MCF 10A (cell line): ENCODE measurements at regions of chr16 and their contacts with region 1.

Region 1: DNA sequence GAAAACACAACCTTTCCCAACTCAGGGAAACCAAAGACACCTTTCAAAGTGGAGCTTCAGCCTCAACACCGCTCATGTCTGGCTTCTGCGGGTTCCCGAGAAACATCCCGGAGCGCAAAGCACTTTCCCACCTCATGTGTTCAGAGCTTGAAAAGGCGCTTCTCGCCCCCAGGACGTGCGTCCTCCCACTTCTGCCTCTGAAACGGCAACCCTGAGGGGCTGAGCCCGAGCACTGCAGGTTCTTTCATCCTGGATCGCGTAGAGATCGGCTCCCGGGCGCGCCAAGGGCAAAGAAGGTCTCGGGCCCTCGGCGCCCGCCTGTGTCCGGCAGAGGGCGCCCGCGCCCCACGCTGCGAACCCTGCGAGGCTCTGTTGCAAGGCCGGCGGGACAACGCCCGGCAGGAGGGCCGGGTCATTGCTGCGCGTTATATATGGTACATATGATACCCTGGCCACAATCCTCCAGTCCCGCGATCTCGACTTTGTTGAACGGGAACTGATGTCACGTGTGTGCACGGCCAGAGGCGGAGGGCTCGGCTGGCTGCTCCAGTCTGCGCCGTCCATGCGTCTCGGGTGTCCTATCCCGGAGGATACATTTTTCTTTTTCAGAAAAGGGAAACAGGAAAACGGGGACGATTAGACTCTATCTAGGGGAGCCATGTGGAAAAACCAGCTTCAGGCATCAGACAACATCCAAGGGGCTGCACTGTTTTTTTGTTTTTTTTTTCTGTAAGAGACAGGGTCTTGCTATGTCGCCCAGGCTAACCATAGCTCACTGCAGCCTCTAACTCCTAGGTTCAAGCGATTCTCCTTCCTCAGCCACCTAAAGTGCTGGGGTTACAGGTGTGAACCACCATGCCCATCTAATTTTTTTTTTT is 19.1 kb downstream of the COQ7 start:
- DNase-seq: peak; percentile 85
- H3K4me3 Mint-ChIP-seq: peak overlapping the region; percentile 54
- H3K27ac Mint-ChIP-seq: no peak overlapping the region
- H3K4me1 Mint-ChIP-seq: peaks cover 6% of the 10 kb centered on the region
- H3K27me3 Mint-ChIP-seq: no peaks in the 10 kb centered on the region
- CTCF ChIP-seq: peak; percentile 97

Region 2: DNA sequence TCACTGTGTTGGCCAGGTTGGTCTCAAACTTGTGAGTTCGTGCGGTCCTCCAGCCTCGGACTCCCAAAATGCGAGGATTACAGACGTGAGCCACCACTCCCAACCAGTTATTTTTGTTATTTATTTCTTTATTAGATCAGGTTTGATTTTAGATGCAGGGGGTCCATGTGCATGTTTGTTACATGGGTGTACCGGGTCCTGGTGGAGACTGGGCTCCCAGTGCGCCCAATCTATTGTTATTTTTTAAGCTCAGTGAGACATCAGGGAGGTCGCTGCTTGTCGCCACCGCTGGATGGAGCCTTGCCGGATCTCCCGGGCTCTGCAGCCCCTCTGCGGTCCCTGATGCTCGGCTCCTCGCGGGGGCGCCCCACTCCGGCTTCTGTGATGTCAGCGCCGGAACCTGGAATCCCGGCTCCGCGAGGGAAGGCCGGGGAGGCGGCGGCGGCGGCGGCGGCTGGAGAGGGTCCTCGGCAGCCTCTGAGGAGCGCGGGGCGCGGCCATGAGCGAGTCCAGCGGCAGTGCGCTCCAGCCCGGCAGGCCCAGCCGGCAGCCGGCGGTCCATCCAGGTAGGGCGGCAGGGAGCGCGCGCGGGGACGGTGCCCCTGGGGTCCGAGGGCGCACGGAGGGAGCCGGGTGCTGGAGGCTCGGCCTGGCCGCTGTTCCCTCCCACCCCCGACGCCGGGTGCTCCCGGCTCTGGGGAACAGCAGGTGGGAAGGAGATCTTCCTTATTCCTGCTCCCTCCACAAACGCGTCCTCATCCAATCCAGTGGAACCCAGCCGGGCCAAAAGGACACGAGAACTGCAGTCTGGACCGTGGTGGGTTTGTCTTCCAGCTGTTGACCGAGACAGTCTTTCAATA is 102.8 kb before region 1 on chr16 and contains the start of gene TMC7:
- CTCF ChIA-PET with region 1: interaction called, 29 read pairs
- POLR2A ChIA-PET with region 1: no interaction called
- intact Hi-C with region 1: no loop called
- DNase-seq: peak; percentile 84
- H3K4me3 Mint-ChIP-seq: peak within 1 kb of the TSS; percentile 72
- H3K27ac Mint-ChIP-seq: peak within 1 kb of the TSS; percentile 49
- H3K4me1 Mint-ChIP-seq: peaks cover 9% of the 10 kb centered on the region
- H3K27me3 Mint-ChIP-seq: no peaks in the 10 kb centered on the region
- CTCF ChIP-seq: peak; percentile 92
- total RNA-seq, gene TMC7: 4.1 and 6.0 TPM in 2 replicates

Region 3: DNA sequence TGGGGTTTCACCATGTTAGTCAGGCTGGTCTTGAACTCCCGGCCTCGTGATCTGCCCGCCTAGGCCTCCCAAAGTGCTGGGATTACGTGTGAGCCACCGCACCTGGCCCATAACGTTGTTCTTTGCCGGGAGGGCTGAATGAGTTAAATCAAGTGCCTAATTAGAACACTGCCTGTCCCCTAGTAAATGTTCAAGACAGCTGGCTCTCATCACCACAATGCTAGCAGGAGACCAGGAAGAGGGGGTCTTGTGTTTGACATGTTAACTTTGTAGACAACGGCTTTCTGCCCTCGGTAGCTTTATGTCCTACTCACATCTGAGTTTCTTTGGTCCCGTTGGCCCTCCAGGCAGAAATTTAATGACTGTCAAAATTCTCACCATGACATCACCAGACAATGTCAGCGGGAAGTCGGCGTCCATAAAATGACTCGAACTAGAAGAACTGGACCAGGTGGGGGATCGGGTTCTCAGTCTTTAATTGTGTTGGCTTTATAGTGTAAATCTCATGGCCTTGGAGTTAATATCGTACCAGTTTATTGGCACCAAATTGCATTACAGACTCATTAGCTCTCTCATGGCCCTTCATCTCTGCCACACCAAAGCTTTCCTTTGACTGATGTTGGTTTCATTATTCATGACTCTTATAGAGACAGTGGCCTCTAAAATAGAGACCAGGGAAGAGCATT is 15.8 kb after region 1 on chr16:
- CTCF ChIA-PET with region 1: interaction called, 14 read pairs
- POLR2A ChIA-PET with region 1: no interaction called
- intact Hi-C with region 1: no loop called
- DNase-seq: no peak
- H3K4me3 Mint-ChIP-seq: no peak overlapping the region
- H3K27ac Mint-ChIP-seq: no peak overlapping the region
- H3K4me1 Mint-ChIP-seq: peaks cover 2% of the 10 kb centered on the region
- H3K27me3 Mint-ChIP-seq: no peaks in the 10 kb centered on the region
- CTCF ChIP-seq: no peak

Region 4: DNA sequence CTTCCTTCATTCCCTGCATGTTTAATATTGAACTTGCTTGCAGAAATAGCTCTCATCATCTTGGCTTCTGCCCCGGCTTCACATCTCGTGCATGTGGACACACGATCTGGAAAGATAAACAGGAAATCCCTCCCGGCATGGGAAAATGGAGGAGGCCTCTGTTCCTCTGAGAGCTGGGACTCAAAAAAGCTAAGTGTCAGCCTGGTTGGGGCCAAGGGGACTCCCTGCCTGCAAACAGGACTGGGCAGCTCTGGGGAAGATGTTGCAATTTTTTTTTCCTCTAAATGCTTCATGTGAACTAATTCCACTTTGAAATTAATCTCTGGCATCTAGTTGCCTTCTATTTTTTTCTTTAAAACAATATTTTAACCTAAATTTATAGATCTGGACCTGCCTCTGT is 52.0 kb after region 1 on chr16:
- CTCF ChIA-PET with region 1: interaction called, 18 read pairs
- POLR2A ChIA-PET with region 1: interaction called, 4 read pairs
- intact Hi-C with region 1: no loop called
- DNase-seq: peak; percentile 99
- H3K4me3 Mint-ChIP-seq: peak overlapping the region; percentile 24
- H3K27ac Mint-ChIP-seq: peak overlapping the region; percentile 44
- H3K4me1 Mint-ChIP-seq: peaks cover 61% of the 10 kb centered on the region
- H3K27me3 Mint-ChIP-seq: no peaks in the 10 kb centered on the region
- CTCF ChIP-seq: no peak

Region 5: DNA sequence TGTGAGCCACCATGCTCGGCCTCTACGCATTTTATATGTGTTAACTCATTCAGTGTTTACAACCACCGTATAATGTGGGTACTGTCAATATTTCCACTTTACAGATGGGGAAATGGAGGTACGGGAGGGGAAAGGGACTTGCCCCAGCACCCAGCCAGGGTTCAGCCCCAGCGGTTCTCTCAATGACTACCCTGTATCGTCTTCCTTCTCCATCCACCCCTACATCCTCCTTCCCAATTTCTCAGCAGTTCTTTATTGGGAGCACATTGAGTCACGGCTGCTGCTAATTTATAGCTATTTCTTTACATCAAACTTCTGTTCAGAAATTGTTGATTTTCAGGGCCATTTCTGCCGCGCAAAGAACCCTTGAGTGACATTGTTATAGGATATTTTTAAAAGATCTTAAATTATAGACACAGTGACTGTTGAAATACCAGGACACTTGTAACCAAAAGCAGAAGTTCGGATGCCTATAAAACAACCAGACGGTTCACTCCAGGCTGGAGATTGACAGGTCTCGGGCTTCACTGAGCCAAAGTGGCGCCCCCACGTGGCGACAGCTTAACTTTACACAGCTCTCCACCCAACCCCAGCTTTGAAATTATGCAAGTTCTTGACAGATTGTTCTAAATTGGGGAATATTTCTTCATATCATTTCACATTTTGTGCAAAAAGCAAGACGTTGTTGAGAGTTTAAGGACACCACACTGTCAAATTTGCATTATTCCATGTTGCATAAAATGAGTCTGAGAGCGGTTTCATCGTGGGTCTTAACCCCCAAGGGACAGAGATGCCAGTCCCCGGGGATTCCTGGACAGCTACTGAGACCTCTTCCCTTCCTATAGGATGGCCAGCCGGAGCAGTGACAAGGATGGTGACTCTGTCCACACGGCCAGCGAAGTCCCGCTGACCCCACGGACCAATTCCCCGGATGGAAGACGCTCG is 93.3 kb after region 1 on chr16:
- CTCF ChIA-PET with region 1: interaction called, 8 read pairs
- POLR2A ChIA-PET with region 1: no interaction called
- intact Hi-C with region 1: loop called (anchors 1 kb)
- DNase-seq: peak; percentile 69
- H3K4me3 Mint-ChIP-seq: no peak overlapping the region
- H3K27ac Mint-ChIP-seq: no peak overlapping the region
- H3K4me1 Mint-ChIP-seq: no peaks in the 10 kb centered on the region
- H3K27me3 Mint-ChIP-seq: no peaks in the 10 kb centered on the region
- CTCF ChIP-seq: peak; percentile 48

Region 6: DNA sequence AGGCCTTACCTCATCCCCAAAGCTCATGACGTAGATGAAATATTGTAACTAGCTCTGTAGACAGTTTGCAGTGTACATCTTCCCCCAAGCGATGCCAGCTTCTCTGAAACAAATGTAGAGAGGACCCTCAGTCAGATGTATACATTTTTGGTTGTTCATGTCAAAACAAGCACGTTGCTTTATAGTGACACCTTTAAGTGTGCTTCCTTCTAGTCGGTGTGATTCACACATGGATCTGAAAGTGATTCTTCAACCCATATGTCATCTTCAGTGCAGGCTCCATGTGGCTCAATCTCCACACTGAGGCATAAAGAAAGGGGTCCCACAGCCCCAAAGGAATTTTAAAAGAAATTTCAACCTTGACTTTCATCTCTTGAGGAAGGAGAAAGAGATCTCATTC is 168.1 kb after region 1 on chr16:
- CTCF ChIA-PET with region 1: no interaction called
- POLR2A ChIA-PET with region 1: no interaction called
- intact Hi-C with region 1: no loop called
- DNase-seq: no peak
- H3K4me3 Mint-ChIP-seq: no peak overlapping the region
- H3K27ac Mint-ChIP-seq: no peak overlapping the region
- H3K4me1 Mint-ChIP-seq: no peaks in the 10 kb centered on the region
- H3K27me3 Mint-ChIP-seq: peaks cover 35% of the 10 kb centered on the region
- CTCF ChIP-seq: no peak

Region 7: GRCh38 chr16:19375561-19376158 is 289.1 kb after region 1 on chr16:
- CTCF ChIA-PET with region 1: interaction called, 154 read pairs
- POLR2A ChIA-PET with region 1: interaction called, 4 read pairs
- intact Hi-C with region 1: loop called (anchors 1 kb)
- DNase-seq: peak; percentile 64
- H3K4me3 Mint-ChIP-seq: no peak overlapping the region
- H3K27ac Mint-ChIP-seq: no peak overlapping the region
- H3K4me1 Mint-ChIP-seq: no peaks in the 10 kb centered on the region
- H3K27me3 Mint-ChIP-seq: no peaks in the 10 kb centered on the region
- CTCF ChIP-seq: peak; percentile 90

Region 8: DNA sequence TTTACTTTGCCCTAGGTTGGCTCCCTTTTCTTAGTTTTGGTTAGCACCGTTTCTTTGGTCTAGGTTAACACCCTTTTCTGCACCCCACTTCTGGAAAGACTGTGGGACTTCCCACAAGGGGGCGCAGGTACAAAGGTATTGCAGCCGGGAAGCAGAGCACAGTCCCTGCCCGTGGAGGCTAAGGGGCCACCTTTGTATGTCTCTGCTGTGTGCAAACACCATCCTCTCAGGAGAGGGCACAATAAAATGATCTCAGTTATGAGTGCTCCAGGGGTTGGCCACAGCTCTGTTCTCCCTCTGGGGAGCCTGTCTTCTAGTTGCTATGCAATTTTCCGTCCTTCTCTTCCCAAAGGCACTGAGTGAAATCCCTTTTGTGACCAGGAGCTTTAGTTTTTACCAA is 302.7 kb after region 1 on chr16:
- CTCF ChIA-PET with region 1: interaction called, 38 read pairs
- POLR2A ChIA-PET with region 1: no interaction called
- intact Hi-C with region 1: no loop called
- DNase-seq: peak; percentile 73
- H3K4me3 Mint-ChIP-seq: no peak overlapping the region
- H3K27ac Mint-ChIP-seq: no peak overlapping the region
- H3K4me1 Mint-ChIP-seq: peaks cover 20% of the 10 kb centered on the region
- H3K27me3 Mint-ChIP-seq: no peaks in the 10 kb centered on the region
- CTCF ChIP-seq: peak; percentile 51